HepG2 (cell line): ENCODE measurements at regions of chr17 and their contacts with region 1.

Region 1: GRCh38 chr17:21214015-21214776 is at the start of gene TMEM11:
- DNase-seq: peak; percentile 86
- ATAC-seq: peak; percentile 93
- H3K4me3 ChIP-seq: peak within 1 kb of the TSS; percentile 83 to 99 (median 96)
- H3K27ac ChIP-seq: peak within 1 kb of the TSS; percentile 94
- H3K4me1 ChIP-seq: peaks cover 60% of the 10 kb centered on the region
- H3K27me3 ChIP-seq: no peaks in the 10 kb centered on the region; a peak in 1 of 5 replicates
- CTCF ChIP-seq: peak; percentile 24; the same call in 1 of the 2 replicates
- EP300 ChIP-seq: no peak
- POLR2A ChIP-seq: peak; percentile 70 to 71
- RAD21 ChIP-seq: no peak; the same call in none of the 2 replicates
- total RNA-seq, gene TMEM11: 18.7 and 21.3 TPM in 2 replicates

Region 2: DNA sequence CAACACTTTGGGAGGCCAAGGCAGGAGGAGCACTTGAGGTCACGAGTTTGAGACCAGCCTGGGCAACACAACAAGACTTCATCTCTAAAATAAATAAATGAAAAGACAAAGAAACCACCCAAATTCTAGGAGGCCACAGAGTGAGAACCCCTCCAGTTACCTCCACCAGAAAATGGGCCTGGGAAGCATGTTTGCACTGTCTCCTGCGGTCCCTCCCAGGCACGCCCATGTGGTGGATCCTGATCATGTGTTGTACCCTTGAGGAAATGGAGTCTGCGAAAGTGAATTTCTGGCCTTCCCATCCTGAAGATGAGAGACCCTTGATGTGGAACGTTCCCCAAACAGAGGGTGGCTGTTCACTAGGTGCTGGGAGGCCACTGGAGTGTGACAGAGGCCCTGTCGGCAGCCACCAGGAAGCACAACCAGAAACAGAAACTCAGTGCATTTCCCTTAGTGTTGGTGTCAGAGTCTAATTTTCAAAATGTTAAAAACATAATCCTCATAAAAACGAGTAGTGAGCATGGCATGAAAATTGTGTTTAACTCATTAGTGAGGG is 152.1 kb before region 1 on chr17:
- CTCF ChIA-PET with region 1: no interaction called
- POLR2A ChIA-PET with region 1: no interaction called
- in situ Hi-C with region 1: no loop called
- intact Hi-C with region 1: no loop called
- DNase-seq: no peak
- ATAC-seq: no peak
- H3K4me3 ChIP-seq: no peak overlapping the region
- H3K27ac ChIP-seq: no peak overlapping the region
- H3K4me1 ChIP-seq: no peaks in the 10 kb centered on the region
- H3K27me3 ChIP-seq: peaks cover 11 to 29% of the 10 kb centered on the region in 2 experiments; a peak in 4 of 5 replicates
- CTCF ChIP-seq: no peak
- EP300 ChIP-seq: no peak
- POLR2A ChIP-seq: no peak
- RAD21 ChIP-seq: no peak

Region 3: DNA sequence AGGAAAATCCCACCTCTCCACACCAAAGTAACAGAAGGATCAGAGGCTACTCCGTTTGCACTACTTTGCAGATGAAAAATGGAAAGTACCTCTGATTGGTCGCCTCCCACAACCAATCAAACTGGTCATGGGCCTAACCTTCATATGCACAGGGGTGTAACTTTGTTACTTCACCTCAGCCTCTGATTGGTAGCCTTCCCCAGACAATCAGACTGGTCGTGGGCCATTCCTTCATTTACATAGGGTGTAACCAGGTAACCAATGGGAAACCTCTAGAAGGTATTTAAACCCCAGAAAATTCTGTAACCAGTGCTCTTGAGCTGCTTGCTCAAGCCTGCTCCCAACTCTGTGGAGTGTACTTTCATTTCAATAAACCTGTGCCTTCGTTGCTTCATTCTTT is 132.2 kb before region 1 on chr17:
- CTCF ChIA-PET with region 1: no interaction called
- POLR2A ChIA-PET with region 1: no interaction called
- in situ Hi-C with region 1: no loop called
- intact Hi-C with region 1: no loop called
- DNase-seq: no peak
- ATAC-seq: no peak
- H3K4me3 ChIP-seq: no peak overlapping the region
- H3K27ac ChIP-seq: no peak overlapping the region
- H3K4me1 ChIP-seq: no peaks in the 10 kb centered on the region
- H3K27me3 ChIP-seq: peaks cover 0 to 36% of the 10 kb centered on the region in 2 experiments; a peak in 2 of 5 replicates
- CTCF ChIP-seq: no peak
- EP300 ChIP-seq: no peak
- POLR2A ChIP-seq: no peak
- RAD21 ChIP-seq: no peak

Region 4: GRCh38 chr17:21252796-21253645 is 38.8 kb after region 1 on chr17 and contains the start of gene NATD1:
- CTCF ChIA-PET with region 1: no interaction called
- POLR2A ChIA-PET with region 1: no interaction called
- in situ Hi-C with region 1: no loop called
- intact Hi-C with region 1: loop called (anchors 1 kb)
- DNase-seq: peak; percentile 68
- ATAC-seq: peak; percentile 56
- H3K4me3 ChIP-seq: peak within 1 kb of the TSS; percentile 65 to 76 (median 75)
- H3K27ac ChIP-seq: no peak within 1 kb of the TSS
- H3K4me1 ChIP-seq: peaks cover 22% of the 10 kb centered on the region
- H3K27me3 ChIP-seq: peaks cover 3 to 34% of the 10 kb centered on the region in 2 experiments; a peak in 4 of 5 replicates
- CTCF ChIP-seq: 0 out of 2 replicates have a peak, but pooled peaks have one; percentile 12
- EP300 ChIP-seq: no peak
- POLR2A ChIP-seq: 0 out of 4 replicates have a peak, but pooled peaks of 1 of the 2 experiments have one; percentile 46
- RAD21 ChIP-seq: no peak
- total RNA-seq, gene NATD1: 0.31 and 0.45 TPM in 2 replicates

Region 5: GRCh38 chr17:21263351-21263750 is 49.2 kb after region 1 on chr17:
- CTCF ChIA-PET with region 1: no interaction called
- POLR2A ChIA-PET with region 1: no interaction called
- in situ Hi-C with region 1: no loop called
- intact Hi-C with region 1: no loop called
- DNase-seq: no peak
- ATAC-seq: no peak
- H3K4me3 ChIP-seq: no peak overlapping the region
- H3K27ac ChIP-seq: no peak overlapping the region
- H3K4me1 ChIP-seq: no peaks in the 10 kb centered on the region
- H3K27me3 ChIP-seq: peaks cover 0 to 2% of the 10 kb centered on the region in 2 experiments; a peak in 2 of 5 replicates
- CTCF ChIP-seq: no peak
- EP300 ChIP-seq: no peak
- POLR2A ChIP-seq: no peak
- RAD21 ChIP-seq: no peak

Region 6: GRCh38 chr17:21330436-21331160 is 116.4 kb after region 1 on chr17:
- CTCF ChIA-PET with region 1: no interaction called
- POLR2A ChIA-PET with region 1: no interaction called
- in situ Hi-C with region 1: no loop called
- intact Hi-C with region 1: no loop called
- DNase-seq: no peak
- ATAC-seq: no peak
- H3K4me3 ChIP-seq: no peak overlapping the region
- H3K27ac ChIP-seq: no peak overlapping the region
- H3K4me1 ChIP-seq: no peaks in the 10 kb centered on the region
- H3K27me3 ChIP-seq: no peaks in the 10 kb centered on the region
- CTCF ChIP-seq: no peak
- EP300 ChIP-seq: no peak
- POLR2A ChIP-seq: no peak
- RAD21 ChIP-seq: no peak